ENCODE measurements at regions of chr17 and their contacts with region 1.

Region 1: GRCh38 chr17:8118769-8119580 is 661 bp upstream of the ALOXE3 start:
- DNase-seq: peak; percentile 65
- ATAC-seq: peak; percentile 61
- H3K4me3 ChIP-seq: peak overlapping the region; percentile 52 to 59
- H3K27ac ChIP-seq: peak overlapping the region; percentile 83
- H3K4me1 ChIP-seq: peaks cover 22 to 66% of the 10 kb centered on the region in 2 experiments
- H3K27me3 ChIP-seq: no peaks in the 10 kb centered on the region
- CTCF ChIP-seq: peak; percentile 65 to 83 (median 79); a peak in 5 of 6 replicates
- POLR2A ChIP-seq: no peak
- RAD21 ChIP-seq: peak; percentile 58

Region 2: GRCh38 chr17:8079291-8080207 is 39.4 kb before region 1 on chr17:
- CTCF ChIA-PET with region 1: interaction called, 18 read pairs
- POLR2A ChIA-PET with region 1: no interaction called
- RAD21 ChIA-PET with region 1: no interaction called
- intact Hi-C with region 1: loop called (anchors 5 kb)
- DNase-seq: peak; percentile 72
- ATAC-seq: peak; percentile 88
- H3K4me3 ChIP-seq: peak overlapping the region; percentile 68 to 81
- H3K27ac ChIP-seq: peak overlapping the region; percentile 79
- H3K4me1 ChIP-seq: peaks cover 2 to 25% of the 10 kb centered on the region in 2 experiments; a peak in 3 of 4 replicates
- H3K27me3 ChIP-seq: no peaks in the 10 kb centered on the region
- CTCF ChIP-seq: peak; percentile 84 to 98 (median 86)
- POLR2A ChIP-seq: no peak
- RAD21 ChIP-seq: peak; percentile 79

Region 3: GRCh38 chr17:8138672-8139371 is 19.8 kb after region 1 on chr17:
- CTCF ChIA-PET with region 1: interaction called, 13 read pairs
- POLR2A ChIA-PET with region 1: interaction called, 7 read pairs
- RAD21 ChIA-PET with region 1: interaction called in 1 of 2 experiments, 5 read pairs
- intact Hi-C with region 1: loop called (anchors 2 kb)
- DNase-seq: peak; percentile 95
- ATAC-seq: peak; percentile 89
- H3K4me3 ChIP-seq: peak overlapping the region; percentile 14 to 48; a peak in 3 of 4 replicates
- H3K27ac ChIP-seq: peak overlapping the region; percentile 63
- H3K4me1 ChIP-seq: peaks cover 30 to 61% of the 10 kb centered on the region in 2 experiments
- H3K27me3 ChIP-seq: no peaks in the 10 kb centered on the region
- CTCF ChIP-seq: peak; percentile 86 to 87 (median 87)
- POLR2A ChIP-seq: no peak
- RAD21 ChIP-seq: peak; percentile 88

Region 4: GRCh38 chr17:8189711-8190477 is 70.9 kb after region 1 on chr17 and contains the start of gene BORCS6:
- CTCF ChIA-PET with region 1: interaction called, 6 read pairs
- POLR2A ChIA-PET with region 1: interaction called, 4 read pairs
- RAD21 ChIA-PET with region 1: no interaction called
- intact Hi-C with region 1: loop called (anchors 1 kb)
- DNase-seq: peak; percentile 96
- ATAC-seq: peak; percentile 64
- H3K4me3 ChIP-seq: peak within 1 kb of the TSS; percentile 75 to 83
- H3K27ac ChIP-seq: peak within 1 kb of the TSS; percentile 89
- H3K4me1 ChIP-seq: peaks cover 32 to 64% of the 10 kb centered on the region in 2 experiments
- H3K27me3 ChIP-seq: no peaks in the 10 kb centered on the region
- CTCF ChIP-seq: no peak
- POLR2A ChIP-seq: no peak
- RAD21 ChIP-seq: no peak
- total RNA-seq, gene BORCS6: 6.4 TPM

Region 5: DNA sequence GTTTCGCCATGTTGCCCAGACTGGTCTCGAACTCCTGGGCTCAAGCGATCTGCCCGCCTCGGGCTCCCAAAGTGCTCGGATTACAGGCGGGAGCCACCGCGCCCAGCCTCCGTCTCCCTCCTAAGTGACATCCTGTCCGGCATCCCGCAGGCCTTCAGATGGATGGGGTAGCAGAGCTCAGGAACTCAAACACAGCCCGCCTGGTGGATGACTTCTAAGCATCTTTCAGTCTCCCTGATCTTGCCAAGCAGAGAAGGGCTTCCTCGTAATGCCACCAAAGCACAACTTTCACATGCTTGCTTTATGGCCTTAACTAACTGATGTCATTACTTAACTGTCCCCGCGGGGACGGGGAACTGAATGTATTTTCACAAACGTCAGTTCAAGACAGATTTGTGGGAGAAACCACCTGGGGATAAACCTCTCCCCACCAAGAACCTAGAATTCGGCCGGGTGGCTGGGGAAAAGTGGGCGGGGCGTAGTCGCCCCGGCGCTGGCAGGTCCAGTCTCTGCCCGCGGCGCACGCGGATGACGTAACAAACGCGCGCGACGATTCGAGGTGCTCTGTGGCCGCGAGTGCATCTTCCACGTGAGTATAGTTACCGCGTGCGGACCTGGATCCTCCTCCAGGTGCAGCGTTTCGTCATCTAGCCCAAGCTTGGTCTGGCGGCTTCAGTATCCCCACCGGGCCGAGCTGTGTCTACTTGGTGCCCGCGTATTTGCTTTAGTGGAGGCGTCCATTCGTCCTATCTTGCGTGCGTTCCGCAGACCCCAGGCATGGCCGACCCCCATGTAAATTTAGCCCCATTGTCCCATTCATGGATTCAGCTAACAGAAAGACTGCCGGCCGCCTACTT is 130.0 kb after region 1 on chr17 and contains the start of gene PFAS:
- CTCF ChIA-PET with region 1: interaction called, 3 read pairs
- POLR2A ChIA-PET with region 1: interaction called, 5 read pairs
- RAD21 ChIA-PET with region 1: no interaction called
- intact Hi-C with region 1: loop called (anchors 1 kb)
- DNase-seq: peak; percentile 90
- ATAC-seq: peak; percentile 64
- H3K4me3 ChIP-seq: peak within 1 kb of the TSS; percentile 85 to 99
- H3K27ac ChIP-seq: peak within 1 kb of the TSS; percentile 98
- H3K4me1 ChIP-seq: peaks cover 14 to 26% of the 10 kb centered on the region in 2 experiments
- H3K27me3 ChIP-seq: no peaks in the 10 kb centered on the region
- CTCF ChIP-seq: no peak
- POLR2A ChIP-seq: peak; percentile 89
- RAD21 ChIP-seq: no peak
- total RNA-seq, gene PFAS: 80.6 TPM

Region 6: DNA sequence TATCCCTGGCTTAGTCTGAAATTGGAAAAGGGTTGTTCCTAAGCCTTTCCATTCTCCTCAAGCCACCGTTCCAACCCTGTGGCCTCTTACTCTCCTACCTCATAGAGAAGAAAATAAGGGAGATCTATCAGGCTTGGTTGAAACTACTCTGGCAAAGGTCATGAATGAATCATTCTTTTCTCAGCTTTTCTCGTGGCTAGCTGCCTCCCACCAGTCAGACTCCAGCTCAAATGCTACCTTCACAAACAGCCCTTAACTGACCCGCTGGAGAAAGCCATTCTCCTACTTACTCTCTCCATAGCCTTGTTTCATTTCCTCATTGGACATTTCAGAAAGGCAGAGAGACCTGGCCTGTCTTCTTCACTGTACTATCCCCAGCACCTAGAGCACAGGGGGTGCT is 502.6 kb after region 1 on chr17:
- CTCF ChIA-PET with region 1: no interaction called
- POLR2A ChIA-PET with region 1: no interaction called
- RAD21 ChIA-PET with region 1: no interaction called
- intact Hi-C with region 1: no loop called
- DNase-seq: no peak
- ATAC-seq: no peak
- H3K4me3 ChIP-seq: no peak overlapping the region; a peak in 1 of 4 replicates
- H3K27ac ChIP-seq: no peak overlapping the region
- H3K4me1 ChIP-seq: peaks cover 0 to 13% of the 10 kb centered on the region in 2 experiments; a peak in 1 of 4 replicates
- H3K27me3 ChIP-seq: no peaks in the 10 kb centered on the region
- CTCF ChIP-seq: no peak
- POLR2A ChIP-seq: no peak
- RAD21 ChIP-seq: no peak

Region 7: DNA sequence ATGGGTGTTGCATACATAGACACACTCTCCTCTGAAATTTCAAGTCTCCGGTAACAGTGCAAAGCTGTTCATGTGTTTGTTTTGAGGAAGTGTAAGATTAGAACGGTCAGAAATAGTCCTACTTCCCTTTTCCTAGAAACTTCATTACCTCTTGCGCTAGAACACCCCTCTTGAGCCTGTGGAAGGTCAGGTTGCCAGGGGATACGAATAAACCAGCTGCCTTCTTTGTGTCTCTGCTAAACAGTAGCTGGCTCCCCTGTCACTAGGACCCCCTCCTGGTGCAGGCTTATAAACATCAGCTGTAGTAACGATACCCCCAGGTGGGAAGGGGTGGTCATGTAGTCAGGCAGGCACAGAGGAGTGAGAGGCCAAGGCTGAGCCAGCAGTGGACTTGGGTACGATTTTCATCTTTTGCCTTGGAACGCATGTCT is 1899.5 kb after region 1 on chr17:
- CTCF ChIA-PET with region 1: no interaction called
- POLR2A ChIA-PET with region 1: no interaction called
- RAD21 ChIA-PET with region 1: no interaction called
- intact Hi-C with region 1: no loop called
- DNase-seq: no peak
- ATAC-seq: no peak
- H3K4me3 ChIP-seq: no peak overlapping the region
- H3K27ac ChIP-seq: no peak overlapping the region
- H3K4me1 ChIP-seq: no peaks in the 10 kb centered on the region
- H3K27me3 ChIP-seq: no peaks in the 10 kb centered on the region; the same call in 1 of the 2 replicates
- CTCF ChIP-seq: no peak
- POLR2A ChIP-seq: no peak
- RAD21 ChIP-seq: no peak